ENCODE measurements at regions of chr3 and their contacts with region 1.

Region 1: GRCh38 chr3:197298341-197298857 is at the start of gene DLG1:
- DNase-seq: peak in 4 of 9 donors; percentile 61 to 81 (median 72)
- ATAC-seq: peak; percentile 70
- H3K4me3 ChIP-seq: peak within 1 kb of the TSS; percentile 86
- H3K4me3 Mint-ChIP-seq: peak within 1 kb of the TSS; percentile 88 to 98 (median 96)
- H3K27ac ChIP-seq: peak within 1 kb of the TSS; percentile 79
- H3K27ac Mint-ChIP-seq: peak within 1 kb of the TSS; percentile 92 to 98 (median 94)
- H3K4me1 ChIP-seq: peaks cover 5 to 11% of the 10 kb centered on the region in 2 donors
- H3K4me1 Mint-ChIP-seq: peaks cover 9 to 40% (median 22%) of the 10 kb centered on the region in 7 donors
- H3K27me3 ChIP-seq: no peaks in the 10 kb centered on the region
- H3K27me3 Mint-ChIP-seq: peaks cover 0 to 35% (median 10%) of the 10 kb centered on the region in 5 donors
- total RNA-seq, gene DLG1: 79.5 to 96.5 (median 86.0) TPM

Region 2: GRCh38 chr3:196942226-196942914 is 356.0 kb before region 1 on chr3 and contains the start of gene NCBP2:
- CTCF ChIA-PET with region 1: no interaction called
- POLR2A ChIA-PET with region 1: interaction called, 3 read pairs
- intact Hi-C with region 1: loop called in 1 of 2 experiments (anchors 1 kb)
- DNase-seq: peak; percentile 98 to 100 (median 99)
- ATAC-seq: peak; percentile 97
- H3K4me3 ChIP-seq: peak within 1 kb of the TSS; percentile 100
- H3K4me3 Mint-ChIP-seq: peak within 1 kb of the TSS; percentile 94 to 99 (median 98)
- H3K27ac ChIP-seq: peak within 1 kb of the TSS; percentile 94
- H3K27ac Mint-ChIP-seq: peak within 1 kb of the TSS; percentile 96 to 100 (median 98)
- H3K4me1 ChIP-seq: peaks cover 16 to 20% of the 10 kb centered on the region in 2 donors
- H3K4me1 Mint-ChIP-seq: peaks cover 30 to 64% (median 49%) of the 10 kb centered on the region in 7 donors
- H3K27me3 ChIP-seq: no peaks in the 10 kb centered on the region
- H3K27me3 Mint-ChIP-seq: peaks cover 0 to 5% (median 0%) of the 10 kb centered on the region in 5 donors
- total RNA-seq, gene NCBP2: 42.9 to 77.3 (median 67.5) TPM

Region 3: DNA sequence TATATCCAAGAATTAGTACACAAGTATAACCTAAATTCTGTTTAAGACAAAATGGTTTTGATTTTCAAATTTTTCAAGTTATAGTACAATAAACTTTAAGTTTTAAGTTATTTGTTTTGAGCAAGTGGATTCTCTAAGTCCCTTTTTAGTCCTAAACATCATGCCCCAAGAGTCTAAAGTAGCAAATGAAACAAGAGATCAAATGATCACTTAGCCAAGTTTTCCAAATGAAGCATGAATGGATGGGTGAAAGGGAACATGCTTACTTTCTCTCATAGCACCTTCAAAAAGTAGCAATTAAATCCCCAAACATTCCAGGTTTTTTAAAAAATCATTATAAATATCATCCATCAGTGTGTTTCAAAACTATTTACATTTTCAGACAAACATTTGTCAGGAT is 19.5 kb before region 1 on chr3:
- CTCF ChIA-PET with region 1: no interaction called
- POLR2A ChIA-PET with region 1: interaction called, 3 read pairs
- intact Hi-C with region 1: loop called in 1 of 2 experiments (anchors 2 kb)
- DNase-seq: no peak
- ATAC-seq: no peak
- H3K4me3 ChIP-seq: no peak overlapping the region
- H3K4me3 Mint-ChIP-seq: no peak overlapping the region
- H3K27ac ChIP-seq: no peak overlapping the region
- H3K27ac Mint-ChIP-seq: no peak overlapping the region
- H3K4me1 ChIP-seq: no peaks in the 10 kb centered on the region
- H3K4me1 Mint-ChIP-seq: peaks cover 22 to 50% (median 35%) of the 10 kb centered on the region in 7 donors
- H3K27me3 ChIP-seq: no peaks in the 10 kb centered on the region
- H3K27me3 Mint-ChIP-seq: no peaks in the 10 kb centered on the region

Region 4: DNA sequence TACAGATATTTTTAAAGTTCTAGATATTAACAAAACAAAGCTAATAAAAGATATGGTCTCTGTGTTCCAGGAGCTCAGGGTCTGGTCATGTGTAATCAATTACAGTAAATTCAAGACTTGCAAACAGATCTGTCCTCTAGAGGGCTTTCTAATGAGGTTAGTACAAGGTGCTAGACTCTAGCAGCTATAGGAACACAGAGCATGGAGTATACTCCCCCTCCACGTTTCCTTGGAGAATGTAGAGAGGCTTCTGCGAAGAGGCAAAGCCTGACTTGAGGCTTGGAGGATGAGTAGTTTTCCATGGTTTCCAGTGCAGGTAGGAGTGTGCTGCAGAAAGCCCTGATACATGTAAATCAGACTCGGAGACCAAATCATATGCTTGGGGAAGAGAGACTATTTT is 32.7 kb after region 1 on chr3:
- CTCF ChIA-PET with region 1: no interaction called
- POLR2A ChIA-PET with region 1: no interaction called
- intact Hi-C with region 1: no loop called
- DNase-seq: no peak
- ATAC-seq: no peak
- H3K4me3 ChIP-seq: no peak overlapping the region
- H3K4me3 Mint-ChIP-seq: no peak overlapping the region
- H3K27ac ChIP-seq: no peak overlapping the region
- H3K27ac Mint-ChIP-seq: no peak overlapping the region
- H3K4me1 ChIP-seq: no peaks in the 10 kb centered on the region
- H3K4me1 Mint-ChIP-seq: peaks cover 0 to 2% (median 0%) of the 10 kb centered on the region in 7 donors
- H3K27me3 ChIP-seq: no peaks in the 10 kb centered on the region
- H3K27me3 Mint-ChIP-seq: peaks cover 0 to 16% (median 6%) of the 10 kb centered on the region in 5 donors

Region 5: GRCh38 chr3:197554562-197555280 is 256.3 kb after region 1 on chr3:
- CTCF ChIA-PET with region 1: no interaction called
- POLR2A ChIA-PET with region 1: no interaction called
- intact Hi-C with region 1: loop called in 1 of 2 experiments (anchors 2 kb)
- DNase-seq: peak; percentile 76 to 93 (median 83)
- ATAC-seq: peak; percentile 97
- H3K4me3 ChIP-seq: peak overlapping the region; percentile 96
- H3K4me3 Mint-ChIP-seq: peak overlapping the region; percentile 91 to 95 (median 93)
- H3K27ac ChIP-seq: peak overlapping the region; percentile 89
- H3K27ac Mint-ChIP-seq: peak overlapping the region; percentile 57 to 94 (median 86)
- H3K4me1 ChIP-seq: peaks cover 7 to 9% of the 10 kb centered on the region in 2 donors
- H3K4me1 Mint-ChIP-seq: peaks cover 23 to 36% (median 31%) of the 10 kb centered on the region in 7 donors
- H3K27me3 ChIP-seq: no peaks in the 10 kb centered on the region
- H3K27me3 Mint-ChIP-seq: peaks cover 0 to 10% (median 6%) of the 10 kb centered on the region in 5 donors

Region 6: DNA sequence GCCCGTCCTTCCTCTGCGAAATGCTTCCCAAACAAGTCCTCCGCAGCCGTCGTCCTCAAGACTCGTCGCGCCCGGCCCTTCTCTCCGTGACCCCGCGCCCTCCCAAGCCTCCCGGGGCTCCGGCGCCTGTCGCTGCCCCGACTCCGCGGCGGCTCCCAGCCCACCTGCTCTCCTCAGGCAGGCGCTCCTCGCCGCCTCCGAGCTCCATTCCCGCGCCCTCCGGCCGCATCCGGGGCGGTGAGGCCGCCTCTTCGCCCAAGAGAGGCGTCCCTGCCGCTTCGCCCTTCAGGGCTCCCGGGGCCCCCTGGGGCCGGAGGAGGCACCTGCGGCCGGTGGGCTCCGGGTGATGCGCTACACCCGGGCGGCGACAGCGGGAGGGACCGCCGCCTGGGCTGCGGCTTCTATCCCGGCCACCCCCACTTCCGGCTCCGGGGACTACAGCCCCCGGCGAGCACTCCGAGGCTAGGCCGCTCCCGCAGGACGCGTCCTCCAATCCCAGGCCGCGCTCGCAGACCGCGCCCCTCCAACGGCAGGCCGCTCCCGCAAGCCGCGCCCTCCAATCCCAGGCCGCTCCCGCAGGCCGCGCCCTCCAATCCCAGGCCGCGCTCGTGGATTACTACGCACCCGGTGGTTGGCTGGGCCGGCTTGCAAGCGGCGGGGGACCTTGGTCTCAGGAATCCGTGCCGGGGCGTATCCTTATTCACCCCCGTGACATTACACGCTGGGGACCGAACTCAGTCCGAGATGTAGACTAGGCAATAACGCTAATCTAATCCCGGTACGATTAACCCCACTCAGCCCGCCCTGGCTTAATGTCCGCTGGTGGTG is 438.3 kb after region 1 on chr3 and contains the start of gene RUBCN:
- CTCF ChIA-PET with region 1: no interaction called
- POLR2A ChIA-PET with region 1: no interaction called
- intact Hi-C with region 1: loop called in 1 of 2 experiments (anchors 2 kb)
- DNase-seq: peak; percentile 81 to 95 (median 93)
- ATAC-seq: peak; percentile 98
- H3K4me3 ChIP-seq: peak within 1 kb of the TSS; percentile 67
- H3K4me3 Mint-ChIP-seq: peak within 1 kb of the TSS; percentile 82 to 99 (median 96)
- H3K27ac ChIP-seq: peak within 1 kb of the TSS; percentile 83
- H3K27ac Mint-ChIP-seq: peak within 1 kb of the TSS; percentile 89 to 99 (median 97)
- H3K4me1 ChIP-seq: peaks cover 9 to 10% of the 10 kb centered on the region in 2 donors
- H3K4me1 Mint-ChIP-seq: peaks cover 29 to 52% (median 32%) of the 10 kb centered on the region in 7 donors
- H3K27me3 ChIP-seq: no peaks in the 10 kb centered on the region
- H3K27me3 Mint-ChIP-seq: no peaks in the 10 kb centered on the region
- total RNA-seq, gene RUBCN: 43.3 to 61.7 (median 52.9) TPM

Measured in naive thymus-derived CD4-positive, alpha-beta T cell (primary cell).